GM10248 (cell line): ENCODE measurements at regions of chr10 and their contacts with region 1.

Region 1: DNA sequence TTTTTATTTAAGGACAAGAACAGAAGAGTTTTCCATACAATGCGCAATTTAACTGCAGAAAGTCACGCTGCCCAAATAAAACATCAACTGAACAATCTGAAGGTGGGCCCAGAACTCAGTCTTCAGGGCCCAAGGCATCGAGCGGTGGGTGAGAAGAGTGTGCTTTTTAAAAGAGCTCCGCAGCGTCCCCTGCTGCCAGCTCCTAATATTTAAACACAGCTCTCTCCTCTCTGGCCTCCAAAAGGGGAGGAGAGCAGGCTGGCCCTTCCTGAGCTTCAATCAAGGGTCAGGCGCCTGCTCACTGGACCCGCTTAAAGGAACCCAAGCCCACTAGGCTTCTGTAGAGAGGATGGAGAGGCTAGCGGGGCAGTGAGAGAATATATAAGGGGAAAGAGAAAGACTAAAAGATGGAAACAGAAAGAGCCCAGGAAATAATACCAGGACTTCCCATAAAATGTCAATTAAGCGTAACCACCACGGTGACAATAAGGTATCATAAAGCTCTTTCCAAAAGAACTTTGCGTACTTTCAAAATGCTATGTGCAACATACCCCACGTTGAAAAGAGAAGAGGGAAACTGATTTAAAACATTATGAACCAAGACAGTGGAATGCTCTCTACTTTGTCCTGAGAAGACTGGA is 2.8 kb downstream of the FAM53B start:
- DNase-seq: peak; percentile 79
- CTCF ChIP-seq: peak; percentile 76

Region 2: GRCh38 chr10:124545351-124546054 is 195.9 kb before region 1 on chr10:
- CTCF ChIA-PET with region 1: interaction called, 57 read pairs
- POLR2A ChIA-PET with region 1: no interaction called
- DNase-seq: no peak
- CTCF ChIP-seq: no peak

Region 3: DNA sequence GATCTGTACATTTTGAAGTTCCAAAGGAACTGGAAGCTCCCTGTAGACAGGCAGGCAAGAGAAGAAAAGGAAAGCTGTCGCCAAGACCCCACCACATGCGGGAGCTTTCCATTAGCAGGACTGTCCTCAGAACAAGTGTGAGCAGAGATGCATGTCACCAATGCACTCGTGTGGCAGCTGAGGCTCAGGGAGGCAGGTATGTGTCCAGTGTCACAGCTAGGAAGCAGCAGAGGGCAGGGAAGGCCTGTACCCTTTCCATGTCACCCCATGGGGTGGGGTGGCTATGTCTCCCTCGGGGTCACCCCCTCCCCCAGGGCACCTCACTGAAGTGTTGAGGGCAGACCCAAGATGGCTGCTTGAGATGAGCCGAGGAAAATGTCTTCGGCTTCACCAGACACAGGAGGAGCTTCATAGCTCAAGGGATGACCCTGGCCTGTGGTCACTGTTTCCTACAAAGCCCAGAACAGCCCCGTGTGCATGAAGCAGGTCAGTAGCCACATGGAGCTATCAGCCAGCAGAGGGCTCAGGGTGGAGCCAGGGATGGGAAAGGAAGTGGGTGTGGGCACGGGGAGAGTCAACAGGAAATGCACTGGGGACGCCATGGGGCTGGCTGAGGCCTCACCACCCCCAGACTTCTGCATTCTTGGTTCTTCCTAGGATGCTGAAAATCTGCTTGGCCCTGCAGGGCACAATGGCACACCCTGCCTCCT is 93.8 kb before region 1 on chr10:
- CTCF ChIA-PET with region 1: interaction called, 29 read pairs
- POLR2A ChIA-PET with region 1: no interaction called
- DNase-seq: peak; percentile 76
- CTCF ChIP-seq: peak; percentile 32

Region 4: GRCh38 chr10:124703778-124704427 is 37.5 kb before region 1 on chr10:
- CTCF ChIA-PET with region 1: interaction called, 42 read pairs
- POLR2A ChIA-PET with region 1: no interaction called
- DNase-seq: no peak
- CTCF ChIP-seq: no peak

Region 5: DNA sequence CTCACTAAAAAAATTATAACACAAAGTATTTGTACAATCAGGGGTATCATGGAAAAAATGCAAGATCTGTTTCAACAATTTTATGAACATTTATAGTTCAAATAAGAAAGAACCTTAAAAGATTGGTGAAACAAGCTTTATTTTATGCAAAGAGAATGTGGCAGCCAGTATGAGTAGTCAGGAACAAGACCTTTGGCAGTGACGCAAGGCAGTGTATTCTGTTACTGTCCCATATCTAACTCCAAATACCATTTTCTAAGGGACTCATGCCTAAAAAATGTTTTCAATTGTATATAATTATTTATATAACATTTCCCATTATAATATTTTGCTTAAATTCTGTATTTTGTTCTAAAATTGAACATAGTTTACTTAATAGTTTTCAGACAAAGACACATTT is 21.9 kb after region 1 on chr10:
- CTCF ChIA-PET with region 1: interaction called, 10 read pairs
- POLR2A ChIA-PET with region 1: no interaction called
- DNase-seq: no peak
- CTCF ChIP-seq: no peak